Endothelial cell of umbilical vein (primary cell): ENCODE measurements at regions of chr11 and their contacts with region 1.

Region 1: GRCh38 chr11:3854977-3855807 is at the start of gene STIM1:
- DNase-seq: peak; percentile 94
- H3K4me3 ChIP-seq: peak within 1 kb of the TSS; percentile 33 to 88 (median 68)
- H3K27ac ChIP-seq: peak within 1 kb of the TSS; percentile 67
- H3K4me1 ChIP-seq: peaks cover 15% of the 10 kb centered on the region
- H3K27me3 ChIP-seq: no peaks in the 10 kb centered on the region
- CTCF ChIP-seq: peak; percentile 95 to 97
- POLR2A ChIP-seq: peak; percentile 49
- total RNA-seq, gene STIM1: 30.9 and 32.7 TPM in 2 replicates

Region 2: GRCh38 chr11:3747684-3748083 is 107.5 kb before region 1 on chr11:
- CTCF ChIA-PET with region 1: no interaction called
- POLR2A ChIA-PET with region 1: no interaction called
- dilution Hi-C with region 1: no loop called
- intact Hi-C with region 1: no loop called
- DNase-seq: no peak
- H3K4me3 ChIP-seq: no peak overlapping the region
- H3K27ac ChIP-seq: no peak overlapping the region
- H3K4me1 ChIP-seq: no peaks in the 10 kb centered on the region
- H3K27me3 ChIP-seq: no peaks in the 10 kb centered on the region
- CTCF ChIP-seq: no peak
- POLR2A ChIP-seq: no peak

Region 3: GRCh38 chr11:3807909-3808860 is 47.0 kb before region 1 on chr11 and contains the start of gene PGAP2:
- CTCF ChIA-PET with region 1: interaction called, 11 read pairs
- POLR2A ChIA-PET with region 1: no interaction called
- dilution Hi-C with region 1: no loop called
- intact Hi-C with region 1: no loop called
- DNase-seq: peak; percentile 57
- H3K4me3 ChIP-seq: peak within 1 kb of the TSS; percentile 62 to 93 (median 91)
- H3K27ac ChIP-seq: peak within 1 kb of the TSS; percentile 37
- H3K4me1 ChIP-seq: peaks cover 11% of the 10 kb centered on the region
- H3K27me3 ChIP-seq: no peaks in the 10 kb centered on the region
- CTCF ChIP-seq: peak; percentile 53 to 83
- POLR2A ChIP-seq: no peak
- total RNA-seq, gene PGAP2: 18.3 and 18.5 TPM in 2 replicates

Region 4: DNA sequence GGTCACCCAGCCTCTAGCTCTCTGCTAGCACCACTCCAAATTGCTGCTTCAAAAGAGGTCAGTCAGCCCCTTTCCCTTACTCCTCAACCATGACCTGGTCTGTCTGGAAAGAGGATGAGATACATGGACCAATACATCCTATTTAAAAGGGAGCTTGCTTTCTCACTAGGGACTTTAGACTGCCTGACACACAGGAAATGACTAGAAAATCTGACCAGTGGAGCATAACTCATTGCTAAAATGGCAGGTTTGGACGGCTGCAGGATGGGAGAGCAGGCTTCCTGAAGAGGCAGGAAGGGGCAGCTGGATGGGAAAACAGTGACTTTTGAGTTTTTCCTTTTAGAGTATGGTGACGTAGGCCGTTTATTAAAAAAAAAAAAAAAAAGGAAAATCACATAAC is 25.5 kb after region 1 on chr11:
- CTCF ChIA-PET with region 1: interaction called, 13 read pairs
- POLR2A ChIA-PET with region 1: no interaction called
- dilution Hi-C with region 1: no loop called
- intact Hi-C with region 1: no loop called
- DNase-seq: peak; percentile 67
- H3K4me3 ChIP-seq: no peak overlapping the region
- H3K27ac ChIP-seq: peak overlapping the region; percentile 50
- H3K4me1 ChIP-seq: peaks cover 23% of the 10 kb centered on the region
- H3K27me3 ChIP-seq: no peaks in the 10 kb centered on the region
- CTCF ChIP-seq: no peak
- POLR2A ChIP-seq: no peak

Region 5: DNA sequence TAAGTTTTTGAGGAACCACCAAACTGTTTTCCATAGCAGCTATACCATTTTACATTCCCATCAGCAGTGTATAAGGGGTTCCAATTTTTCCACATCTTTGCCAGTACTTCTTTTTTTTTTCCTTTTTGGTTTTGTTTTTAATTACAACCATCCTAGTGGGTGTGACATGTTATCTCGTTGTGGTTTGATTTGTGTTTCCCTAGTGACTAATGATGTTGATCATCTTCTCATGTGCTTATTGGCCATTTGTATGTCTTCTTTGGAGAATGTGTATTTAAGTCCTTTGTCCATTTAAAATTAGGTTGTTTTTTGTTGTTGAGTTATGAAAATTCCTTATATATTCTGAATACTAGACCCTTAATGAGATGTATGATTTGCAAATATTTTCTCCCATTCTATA is 59.6 kb after region 1 on chr11:
- CTCF ChIA-PET with region 1: interaction called, 5 read pairs
- POLR2A ChIA-PET with region 1: no interaction called
- dilution Hi-C with region 1: no loop called
- intact Hi-C with region 1: loop called (anchors 5 kb)
- DNase-seq: peak; percentile 19
- H3K4me3 ChIP-seq: no peak overlapping the region
- H3K27ac ChIP-seq: no peak overlapping the region
- H3K4me1 ChIP-seq: peaks cover 3% of the 10 kb centered on the region
- H3K27me3 ChIP-seq: no peaks in the 10 kb centered on the region
- CTCF ChIP-seq: no peak
- POLR2A ChIP-seq: no peak

Region 6: DNA sequence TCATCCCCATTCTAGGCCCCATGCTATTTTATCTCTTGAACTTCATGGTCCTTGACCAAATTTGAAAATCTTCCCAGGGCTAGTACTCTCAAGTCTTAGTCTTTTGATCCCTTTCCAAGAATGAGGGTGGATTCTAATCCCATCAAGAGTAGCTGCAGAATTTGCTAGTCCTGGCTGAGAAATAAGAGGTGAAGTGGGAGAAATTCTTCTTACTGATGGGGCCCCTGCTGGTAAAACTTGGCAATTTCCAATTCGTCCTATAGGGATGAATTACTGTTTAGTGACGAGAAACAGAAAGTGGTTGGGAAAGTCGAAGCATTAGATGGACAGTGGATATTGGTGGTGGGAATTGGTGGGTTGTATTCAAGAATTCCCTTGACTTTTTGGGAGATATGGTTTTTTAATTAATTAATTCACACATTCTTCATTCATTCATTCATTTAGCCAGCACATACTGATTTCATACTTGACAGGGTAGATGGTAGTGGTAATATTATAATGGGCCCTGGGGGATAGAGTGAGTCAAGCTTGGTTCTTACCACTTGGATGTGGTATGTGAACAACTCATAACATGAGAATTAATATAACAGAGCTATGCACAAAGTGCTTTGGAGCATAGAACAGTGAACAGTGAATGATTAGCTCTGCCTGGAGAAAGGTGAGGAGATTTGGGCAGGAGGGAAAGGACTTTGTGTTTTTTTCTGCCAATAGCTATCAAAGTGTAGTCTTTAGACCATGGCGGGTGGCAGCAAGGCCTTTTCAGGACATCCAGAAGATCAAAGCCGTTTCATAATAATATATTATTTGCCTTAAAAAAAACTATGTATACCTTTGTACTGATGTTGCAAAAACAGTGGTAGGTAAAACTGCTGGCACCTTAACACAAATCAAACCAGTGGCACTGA is 104.1 kb after region 1 on chr11:
- CTCF ChIA-PET with region 1: interaction called, 40 read pairs
- POLR2A ChIA-PET with region 1: no interaction called
- dilution Hi-C with region 1: no loop called
- intact Hi-C with region 1: loop called (anchors 1 kb)
- DNase-seq: no peak
- H3K4me3 ChIP-seq: no peak overlapping the region
- H3K27ac ChIP-seq: no peak overlapping the region
- H3K4me1 ChIP-seq: no peaks in the 10 kb centered on the region
- H3K27me3 ChIP-seq: no peaks in the 10 kb centered on the region
- CTCF ChIP-seq: no peak
- POLR2A ChIP-seq: no peak

Region 7: DNA sequence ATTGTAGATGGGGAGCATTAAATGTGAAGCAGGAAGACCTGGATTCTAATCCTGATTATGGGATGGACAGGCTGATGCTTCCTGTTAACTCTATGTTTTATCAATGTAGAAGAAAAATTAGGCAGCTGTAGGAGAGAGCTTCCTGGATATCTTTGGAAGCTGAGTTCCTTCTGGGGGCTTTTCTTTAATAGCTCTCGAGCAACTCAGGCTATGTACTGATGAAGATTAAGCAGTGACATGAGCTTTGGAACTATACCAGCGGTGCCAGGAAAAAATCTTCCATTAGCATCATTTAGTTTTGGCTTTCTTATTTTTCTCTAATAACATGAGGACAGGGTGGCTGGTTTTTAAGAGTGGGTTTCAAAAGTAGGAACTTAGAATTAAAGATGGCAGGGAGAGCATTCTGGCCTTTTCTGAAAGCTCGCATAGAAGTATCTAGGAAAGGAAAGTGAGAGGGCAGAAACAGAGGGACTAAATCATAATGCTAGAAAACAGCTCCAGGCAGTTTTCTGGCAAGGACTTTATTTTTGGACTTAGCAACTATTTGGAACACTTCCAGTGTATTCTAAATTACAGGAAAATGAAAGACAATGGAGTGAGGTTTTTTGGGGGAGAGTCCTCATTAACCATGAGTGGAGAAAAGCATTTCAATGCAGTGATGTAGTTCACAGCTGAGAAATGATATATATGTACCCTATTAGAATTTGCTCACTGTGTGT is 170.2 kb after region 1 on chr11:
- CTCF ChIA-PET with region 1: interaction called, 48 read pairs
- POLR2A ChIA-PET with region 1: interaction called, 3 read pairs
- dilution Hi-C with region 1: no loop called
- intact Hi-C with region 1: loop called (anchors 1 kb)
- DNase-seq: peak; percentile 95
- H3K4me3 ChIP-seq: peak overlapping the region in 1 of 3 experiments; percentile 28
- H3K27ac ChIP-seq: peak overlapping the region; percentile 80
- H3K4me1 ChIP-seq: peaks cover 23% of the 10 kb centered on the region
- H3K27me3 ChIP-seq: no peaks in the 10 kb centered on the region
- CTCF ChIP-seq: no peak
- POLR2A ChIP-seq: no peak

Region 8: DNA sequence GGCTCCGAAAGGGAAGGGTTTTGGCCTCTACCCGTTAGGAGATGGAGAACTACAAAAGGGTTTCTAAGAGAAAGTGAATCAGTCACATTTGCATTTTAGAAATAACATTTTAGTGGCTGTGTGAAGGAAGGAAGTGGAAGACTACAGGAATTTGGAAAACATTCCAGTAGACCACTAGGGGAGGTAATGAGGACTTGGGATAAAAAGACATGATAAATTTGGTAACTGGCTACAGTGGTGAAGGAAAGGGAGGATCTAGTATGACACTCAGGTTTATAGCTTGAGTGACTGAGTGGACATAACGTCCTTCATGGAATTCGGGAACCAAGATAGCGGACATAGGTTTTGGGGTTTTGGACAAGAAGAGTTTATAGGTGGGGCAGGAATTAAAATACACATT is 232.4 kb after region 1 on chr11:
- CTCF ChIA-PET with region 1: interaction called, 45 read pairs
- POLR2A ChIA-PET with region 1: no interaction called
- dilution Hi-C with region 1: no loop called
- intact Hi-C with region 1: no loop called
- DNase-seq: no peak
- H3K4me3 ChIP-seq: no peak overlapping the region
- H3K27ac ChIP-seq: no peak overlapping the region
- H3K4me1 ChIP-seq: no peaks in the 10 kb centered on the region
- H3K27me3 ChIP-seq: no peaks in the 10 kb centered on the region
- CTCF ChIP-seq: peak in 1 of 2 donors; percentile 6
- POLR2A ChIP-seq: no peak